RWPE1 (cell line): ENCODE measurements at regions of chr14 and their contacts with region 1.

Region 1: GRCh38 chr14:53306267-53306721 is 153.2 kb upstream of the DDHD1 start:
- DNase-seq: peak; percentile 72
- H3K27ac ChIP-seq: no peak overlapping the region
- CTCF ChIP-seq: peak; percentile 84

Region 2: DNA sequence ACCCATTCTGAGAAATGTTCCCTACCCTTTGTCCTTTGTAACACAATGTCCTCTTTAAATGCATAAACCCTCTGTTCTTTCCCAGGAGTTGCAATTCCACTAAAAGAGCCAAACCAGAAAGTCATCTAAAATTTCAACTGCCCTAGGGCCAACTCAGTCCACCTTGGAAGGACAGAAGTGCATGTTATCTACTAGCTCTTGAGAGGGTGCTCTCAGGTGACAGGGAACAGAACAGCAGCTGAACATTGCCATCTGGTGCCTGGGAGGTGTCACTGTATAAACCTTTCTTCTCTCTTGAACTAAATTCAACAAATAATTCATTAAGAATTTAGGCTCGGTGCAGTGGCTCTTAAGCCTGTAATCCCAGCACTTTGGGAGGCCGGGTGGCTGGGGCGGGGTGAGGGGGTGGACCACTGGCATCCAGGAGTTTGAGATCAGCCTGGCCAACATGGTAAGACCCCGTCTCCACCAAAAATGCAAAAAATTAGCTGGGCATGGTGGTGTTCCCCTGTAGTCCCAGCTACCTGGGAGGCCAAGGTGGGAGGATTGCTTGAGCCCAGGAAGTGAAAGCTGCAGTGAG is 345.1 kb before region 1 on chr14:
- CTCF ChIA-PET with region 1: no interaction called
- POLR2A ChIA-PET with region 1: no interaction called
- DNase-seq: peak; percentile 72
- H3K27ac ChIP-seq: no peak overlapping the region
- CTCF ChIP-seq: peak; percentile 45

Region 3: DNA sequence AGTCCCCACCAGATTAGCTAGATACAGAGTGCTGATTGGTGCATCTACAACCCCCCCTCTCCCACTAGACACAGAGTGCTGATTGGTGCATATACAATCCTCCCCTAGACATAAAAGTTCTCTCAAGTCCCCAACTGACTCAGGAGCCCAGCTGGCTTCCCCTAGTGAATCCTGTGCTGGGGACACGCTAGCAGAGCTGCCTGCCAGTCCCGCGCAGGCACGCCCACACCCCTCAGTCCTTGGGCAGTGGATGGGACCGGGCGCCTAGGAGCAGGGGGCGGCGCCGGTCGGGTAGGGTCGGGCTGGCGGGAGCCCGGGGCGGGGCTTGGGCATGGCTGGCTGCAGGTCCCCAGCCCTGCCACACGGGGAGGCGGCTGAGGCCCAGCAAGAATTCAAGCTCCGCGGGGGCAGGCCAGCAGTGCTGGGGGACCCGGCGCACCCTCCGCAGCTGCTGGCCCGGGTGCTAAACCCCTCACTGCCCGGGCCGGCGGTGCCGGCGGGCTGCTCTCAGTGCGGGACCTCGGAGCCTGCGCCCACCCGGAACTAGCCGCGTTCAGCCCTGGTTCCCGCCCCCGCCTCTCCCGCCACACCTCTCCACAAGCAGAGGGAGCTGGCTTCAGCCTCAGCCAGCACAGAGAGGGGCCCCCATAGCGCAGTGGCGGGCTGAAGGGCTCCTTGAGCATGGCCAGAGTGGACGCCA is 88.8 kb before region 1 on chr14:
- CTCF ChIA-PET with region 1: no interaction called
- POLR2A ChIA-PET with region 1: no interaction called
- DNase-seq: peak; percentile 51
- H3K27ac ChIP-seq: peak overlapping the region; percentile 38
- CTCF ChIP-seq: peak; percentile 55

Region 4: GRCh38 chr14:53273671-53274072 is 32.6 kb before region 1 on chr14:
- CTCF ChIA-PET with region 1: no interaction called
- POLR2A ChIA-PET with region 1: no interaction called
- DNase-seq: no peak
- H3K27ac ChIP-seq: no peak overlapping the region
- CTCF ChIP-seq: no peak

Region 5: GRCh38 chr14:53295985-53296582 is 10.2 kb before region 1 on chr14:
- CTCF ChIA-PET with region 1: interaction called, 24 read pairs
- POLR2A ChIA-PET with region 1: no interaction called
- DNase-seq: peak; percentile 25
- H3K27ac ChIP-seq: no peak overlapping the region
- CTCF ChIP-seq: peak; percentile 66; the same call in 1 of the 2 replicates